Left cardiac atrium (tissue), 4 donors: ENCODE measurements at regions of chr9 and their contacts with region 1.

Region 1: GRCh38 chr9:92716557-92716956 is 46.6 kb upstream of the IPPK start:
- DNase-seq: peak; percentile 67
- ATAC-seq: peak; percentile 42 to 52

Region 2: DNA sequence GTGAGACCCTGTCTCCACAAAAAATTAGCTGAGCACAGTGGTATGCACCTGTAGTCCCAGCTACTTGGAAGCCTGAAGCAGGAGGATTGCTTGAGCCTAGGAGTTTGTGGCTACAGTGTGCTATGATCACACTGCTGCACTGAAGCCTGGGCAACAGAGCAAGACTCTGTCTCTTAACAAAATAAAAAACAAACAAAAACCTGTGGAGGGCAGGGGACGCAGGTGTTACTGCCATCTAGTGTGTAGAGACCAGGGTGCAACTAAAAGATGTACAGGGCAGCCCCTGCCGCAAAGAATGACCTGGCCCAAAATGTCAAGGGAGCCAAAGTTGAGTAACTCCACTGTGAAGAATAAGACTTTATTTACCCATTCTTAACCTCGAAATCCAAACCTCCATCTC is 261.3 kb before region 1 on chr9:
- intact Hi-C with region 1: no loop called
- DNase-seq: no peak
- ATAC-seq: no peak

Region 3: GRCh38 chr9:92538541-92538940 is 178.0 kb before region 1 on chr9:
- intact Hi-C with region 1: no loop called
- DNase-seq: no peak
- ATAC-seq: peak in 1 of 2 donors; percentile 37

Region 4: DNA sequence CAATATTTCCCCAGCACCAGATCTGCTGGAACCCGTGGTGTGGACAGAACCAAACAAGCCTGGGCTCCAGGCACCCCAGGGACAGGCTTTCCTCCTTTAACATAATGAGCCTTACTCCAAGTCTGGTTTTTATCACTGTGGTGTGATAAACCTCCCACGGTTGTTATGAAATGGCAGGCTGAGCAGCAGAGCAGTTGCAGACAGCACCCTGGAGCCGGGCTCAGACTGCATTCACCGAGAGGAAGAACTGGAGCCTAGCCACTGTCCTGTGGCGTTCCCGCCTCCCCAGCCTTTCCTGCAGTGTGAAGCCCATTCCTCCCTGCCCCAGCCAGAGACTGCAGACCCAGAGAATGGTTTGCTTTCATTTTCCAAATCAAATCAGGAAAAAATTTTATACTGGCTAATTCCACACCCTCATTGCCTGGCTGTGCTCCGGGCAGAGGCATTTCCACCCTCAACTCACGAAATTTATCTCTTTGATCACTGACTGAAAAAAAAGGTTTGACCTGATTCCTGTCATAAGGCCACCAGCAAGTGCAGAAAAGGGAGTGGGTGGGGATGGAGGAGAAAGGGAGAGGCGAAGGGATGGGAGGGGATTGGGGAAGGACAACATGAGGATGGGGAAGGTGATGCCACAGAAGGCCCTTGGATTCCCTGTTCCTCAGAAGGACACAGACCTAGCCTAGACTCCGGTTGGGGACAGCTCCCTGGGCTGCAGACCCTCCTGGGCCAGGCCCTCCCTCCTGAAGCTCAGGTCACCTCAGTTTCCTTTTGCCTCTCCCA is 65.5 kb before region 1 on chr9:
- intact Hi-C with region 1: no loop called
- DNase-seq: peak; percentile 55
- ATAC-seq: peak; percentile 89 to 90

Region 5: GRCh38 chr9:92770360-92770995 is 53.9 kb after region 1 on chr9:
- intact Hi-C with region 1: loop called in 1 of 2 experiments (anchors 5 kb)
- DNase-seq: no peak
- ATAC-seq: peak in 1 of 2 donors; percentile 10